Ovary (tissue), 10 donors: ENCODE measurements at regions of chr10 and their contacts with region 1.

Region 1: GRCh38 chr10:58952747-58953466 is 223.5 kb upstream of the PHYHIPL start:
- DNase-seq: peak in 4 of 5 donors; percentile 27 to 77 (median 52)
- H3K4me3 ChIP-seq: no peak overlapping the region
- H3K27ac ChIP-seq: peak overlapping the region in 1 of 2 donors; percentile 69
- H3K4me1 ChIP-seq: peaks cover 2% of the 10 kb centered on the region
- H3K27me3 ChIP-seq: no peaks in the 10 kb centered on the region
- CTCF ChIP-seq: peak; percentile 57 to 78 (median 74)
- EP300 ChIP-seq: no peak
- POLR2A ChIP-seq: no peak

Region 2: DNA sequence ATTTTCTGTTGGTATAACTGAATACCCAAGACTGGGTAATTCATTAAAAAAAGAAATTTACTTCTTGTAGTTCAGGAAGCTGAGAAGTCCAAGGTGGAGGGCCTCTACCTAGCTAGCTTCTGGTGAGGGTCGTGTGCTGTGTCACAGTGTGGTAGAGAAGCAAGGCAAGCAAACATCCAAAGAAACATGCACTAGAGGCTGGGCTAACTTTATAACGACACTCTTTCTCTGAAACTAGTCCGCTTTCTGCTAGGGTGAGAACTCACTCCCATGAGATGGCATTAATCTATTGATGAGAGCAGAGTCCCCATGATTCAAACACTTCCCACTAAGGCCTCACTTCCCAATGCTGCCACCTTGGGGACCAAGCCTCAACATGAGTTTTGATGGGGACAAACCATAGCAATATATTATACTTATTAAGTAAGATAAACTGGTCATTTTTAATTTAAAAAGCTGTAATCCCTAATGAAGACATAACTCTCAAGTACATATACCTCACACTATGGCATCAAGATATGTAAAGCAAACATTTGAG is 274.3 kb after region 1 on chr10:
- intact Hi-C with region 1: loop called in 2 of 4 experiments (anchors 10 kb)
- DNase-seq: no peak
- H3K4me3 ChIP-seq: no peak overlapping the region
- H3K27ac ChIP-seq: no peak overlapping the region
- H3K4me1 ChIP-seq: no peaks in the 10 kb centered on the region
- H3K27me3 ChIP-seq: no peaks in the 10 kb centered on the region
- CTCF ChIP-seq: no peak
- EP300 ChIP-seq: no peak
- POLR2A ChIP-seq: no peak

Region 3: DNA sequence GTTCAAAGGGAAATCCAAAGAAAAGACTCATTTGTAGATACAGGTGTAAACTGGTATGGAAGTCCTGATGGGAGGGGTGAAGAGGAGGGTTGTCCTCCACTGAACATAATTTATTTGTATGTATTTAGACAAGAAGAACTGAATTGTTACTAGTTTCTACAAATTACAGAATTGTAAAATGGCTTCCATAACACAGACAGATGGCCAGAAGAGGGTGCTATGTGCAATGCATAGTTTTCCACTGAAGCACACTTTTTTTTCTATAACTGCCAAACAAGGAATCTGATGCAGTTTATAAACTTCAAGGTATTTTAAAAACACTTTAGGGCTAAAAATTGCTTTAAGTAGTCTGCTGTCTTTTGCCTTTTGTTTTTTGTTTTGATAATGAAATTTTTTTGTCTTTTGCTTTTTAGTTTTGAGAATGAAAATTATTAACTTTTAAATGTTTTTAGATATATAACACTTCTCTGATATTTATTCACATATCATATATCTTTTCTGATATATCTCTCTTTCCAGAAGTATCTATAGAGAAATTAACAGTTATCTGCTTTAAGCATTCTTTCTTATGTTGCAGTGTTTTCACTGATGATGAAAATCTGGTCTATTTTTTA is 282.0 kb after region 1 on chr10:
- intact Hi-C with region 1: loop called in 1 of 4 experiments (anchors 10 kb)
- DNase-seq: peak in 1 of 5 donors; percentile 30
- H3K4me3 ChIP-seq: no peak overlapping the region
- H3K27ac ChIP-seq: no peak overlapping the region
- H3K4me1 ChIP-seq: no peaks in the 10 kb centered on the region
- H3K27me3 ChIP-seq: no peaks in the 10 kb centered on the region
- CTCF ChIP-seq: peak in 2 of 3 donors; percentile 49 to 51
- EP300 ChIP-seq: no peak
- POLR2A ChIP-seq: no peak

Region 4: GRCh38 chr10:59580026-59580863 is 627.3 kb after region 1 on chr10:
- intact Hi-C with region 1: loop called in 1 of 4 experiments (anchors 5 kb)
- DNase-seq: peak in 1 of 5 donors; percentile 24
- H3K4me3 ChIP-seq: no peak overlapping the region
- H3K27ac ChIP-seq: peak overlapping the region in 1 of 2 donors; percentile 27
- H3K4me1 ChIP-seq: peaks cover 3% of the 10 kb centered on the region
- H3K27me3 ChIP-seq: no peaks in the 10 kb centered on the region
- CTCF ChIP-seq: peak in 2 of 3 donors; percentile 59 to 63
- EP300 ChIP-seq: no peak
- POLR2A ChIP-seq: no peak